Posterior cingulate gyrus (tissue), 11 donors: ENCODE measurements at regions of chr4 and their contacts with region 1.

Region 1: DNA sequence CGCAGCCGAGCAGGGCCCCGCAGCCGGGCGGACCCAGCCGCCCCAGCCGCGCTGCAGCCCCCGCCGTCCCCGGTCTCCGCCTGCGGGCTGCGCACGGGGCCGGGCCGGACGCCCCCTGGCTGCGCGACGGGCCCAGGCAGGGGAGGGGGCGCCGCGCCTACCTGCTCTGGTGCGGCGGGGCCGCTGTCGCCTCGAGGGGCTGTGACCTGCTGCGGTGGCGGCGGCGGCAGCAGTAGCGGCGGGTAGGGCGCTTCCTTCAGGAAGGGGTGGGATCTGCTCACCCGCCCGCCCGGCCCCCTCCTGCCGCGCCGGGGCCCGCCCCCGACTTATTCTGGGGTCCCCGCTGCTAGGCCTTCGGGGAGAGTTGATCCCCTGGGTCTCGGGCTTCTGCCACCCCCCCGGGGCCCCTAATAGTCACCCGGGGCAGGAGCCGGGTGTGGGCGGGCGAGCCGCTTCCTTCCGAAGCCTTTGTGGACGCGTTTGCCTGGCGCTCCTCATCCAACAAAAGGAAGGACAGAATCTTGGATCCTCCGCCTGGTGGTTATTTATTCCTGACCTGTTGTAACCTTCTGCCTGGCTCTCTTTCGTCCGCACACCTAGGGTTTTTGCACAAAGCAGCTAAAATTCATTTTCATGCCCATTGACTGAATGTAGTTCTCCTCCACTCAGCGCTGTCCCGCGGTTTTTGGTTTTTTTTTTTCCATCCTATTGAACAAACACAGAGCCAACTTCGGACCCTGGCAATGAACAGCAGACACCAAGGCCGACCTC is at the start of gene TMEM150C:
- DNase-seq: peak in 8 of 10 donors; percentile 29 to 86 (median 44)

Region 2: DNA sequence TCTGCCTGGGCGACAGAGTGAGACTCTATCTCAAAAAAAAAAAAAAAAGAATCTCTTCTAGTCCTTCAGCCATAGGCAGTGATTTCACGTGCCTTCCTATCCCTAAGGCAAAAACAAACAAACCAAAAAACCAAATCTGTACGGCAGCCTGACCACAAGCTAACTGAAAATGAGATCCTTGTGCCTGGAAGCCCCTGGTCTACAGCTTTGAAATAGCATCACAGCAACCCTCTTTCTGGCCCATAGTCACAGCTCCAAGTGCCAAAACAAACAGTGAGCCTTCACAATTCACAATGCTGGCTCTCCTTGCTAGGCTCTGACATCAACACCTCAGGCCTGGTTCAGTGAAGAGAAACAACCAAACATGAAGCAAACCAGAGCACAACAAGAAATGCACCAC is 46.2 kb before region 1 on chr4:
- intact Hi-C with region 1: loop called (anchors 5 kb)
- DNase-seq: peak in 6 of 10 donors; percentile 42 to 90 (median 52)

Region 3: DNA sequence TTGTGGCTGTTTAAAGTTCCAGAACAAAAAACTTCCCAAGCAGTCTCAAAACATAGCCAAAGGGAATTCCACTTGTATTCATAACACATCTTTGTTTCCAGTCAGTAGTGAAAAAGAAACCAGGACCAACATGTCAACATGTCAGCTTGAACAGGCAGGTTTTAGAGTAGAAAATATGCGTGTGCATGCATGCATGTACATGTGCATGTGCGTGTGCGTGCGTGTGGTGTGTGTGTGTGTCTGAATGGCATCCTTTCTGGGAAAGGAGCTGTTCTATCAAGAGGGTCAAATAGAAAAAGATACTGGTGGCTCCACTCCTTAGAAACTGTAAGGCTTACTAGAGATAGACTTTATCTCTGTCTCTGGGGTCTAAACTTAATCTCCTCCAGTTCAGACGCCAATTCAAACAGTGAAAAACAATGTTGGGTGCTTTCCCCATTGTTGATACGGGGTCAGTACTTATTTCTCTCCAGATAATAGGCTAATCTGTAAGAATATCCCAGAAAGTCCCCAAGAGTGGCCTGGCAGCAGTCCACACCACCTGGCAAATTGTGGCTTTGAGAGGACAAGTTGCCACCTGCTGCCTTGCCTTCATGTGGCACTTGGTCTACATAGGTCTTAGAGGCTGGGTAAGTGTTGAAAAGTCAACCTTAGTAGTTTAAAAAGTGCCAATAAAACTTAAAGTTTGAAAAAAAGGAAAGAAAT is 126.3 kb after region 1 on chr4:
- intact Hi-C with region 1: loop called (anchors 10 kb)
- DNase-seq: no peak